Colonic mucosa (tissue), 4 donors: ENCODE measurements at regions of chr9 and their contacts with region 1.

Region 1: GRCh38 chr9:112174218-112174964 is 706 bp downstream of the SUSD1 start:
- DNase-seq: peak; percentile 84
- H3K4me3 ChIP-seq: peak overlapping the region; percentile 44
- H3K27ac ChIP-seq: peak overlapping the region; percentile 72
- H3K4me1 ChIP-seq: peaks cover 20% of the 10 kb centered on the region
- H3K27me3 ChIP-seq: no peaks in the 10 kb centered on the region
- CTCF ChIP-seq: no peak

Region 2: GRCh38 chr9:112333639-112334431 is 159.4 kb after region 1 on chr9:
- intact Hi-C with region 1: loop called (anchors 10 kb)
- DNase-seq: peak; percentile 95
- H3K4me3 ChIP-seq: peak overlapping the region; percentile 95
- H3K27ac ChIP-seq: peak overlapping the region; percentile 100
- H3K4me1 ChIP-seq: no peaks in the 10 kb centered on the region
- H3K27me3 ChIP-seq: no peaks in the 10 kb centered on the region
- CTCF ChIP-seq: peak; percentile 22